Posterior vena cava (tissue), 2 donors: ENCODE measurements at regions of chr1 and their contacts with region 1.

Region 1: GRCh38 chr1:175673371-175674150 is 69.8 kb downstream of the TNR start:
- DNase-seq: no peak

Region 2: DNA sequence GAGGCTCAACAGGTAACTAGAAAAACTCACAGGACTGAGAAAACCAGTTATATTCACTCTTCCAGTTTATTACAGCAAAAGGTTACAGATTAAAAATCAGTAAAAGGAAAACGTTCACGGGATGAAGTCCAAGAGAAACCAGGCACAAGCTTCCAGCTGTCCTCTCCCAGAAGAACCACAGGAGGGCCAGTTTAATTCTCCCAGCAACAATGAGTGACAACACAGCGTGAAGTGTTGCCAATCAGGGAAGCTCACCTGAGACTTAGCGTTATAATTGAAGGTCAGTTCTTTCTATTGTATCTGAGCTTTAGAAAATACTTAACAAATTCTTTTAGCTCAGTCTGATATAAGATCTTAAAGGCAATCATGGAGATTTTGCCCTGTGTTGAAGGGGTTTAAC is 135.0 kb after region 1 on chr1:
- intact Hi-C with region 1: no loop called
- DNase-seq: no peak

Region 3: DNA sequence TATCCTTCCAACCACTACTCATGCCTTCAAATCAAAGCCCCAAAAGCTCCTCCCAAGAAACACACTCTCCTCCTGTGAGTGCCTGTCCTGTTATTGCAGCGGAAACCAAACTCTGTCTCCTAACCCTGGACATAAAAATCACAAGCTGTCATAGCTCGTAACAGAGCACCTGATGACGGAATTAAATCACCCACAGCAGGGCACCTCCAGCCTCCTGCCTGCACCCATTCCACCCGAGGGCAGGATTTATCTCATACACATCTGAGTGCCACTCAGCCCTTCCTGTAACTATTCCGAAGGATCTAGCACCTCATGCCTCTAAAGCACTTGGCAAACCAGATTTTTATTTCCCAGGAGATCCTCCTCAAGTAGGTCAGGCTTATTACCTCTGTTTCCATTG is 1390.1 kb after region 1 on chr1:
- intact Hi-C with region 1: loop called in 1 of 2 experiments (anchors 5 kb)
- DNase-seq: no peak